Activated CD8-positive, alpha-beta T cell treated with anti-CD3 and anti-CD28 coated beads for 36 hours (primary cell): ENCODE measurements at regions of chr15 and their contacts with region 1.

Region 1: DNA sequence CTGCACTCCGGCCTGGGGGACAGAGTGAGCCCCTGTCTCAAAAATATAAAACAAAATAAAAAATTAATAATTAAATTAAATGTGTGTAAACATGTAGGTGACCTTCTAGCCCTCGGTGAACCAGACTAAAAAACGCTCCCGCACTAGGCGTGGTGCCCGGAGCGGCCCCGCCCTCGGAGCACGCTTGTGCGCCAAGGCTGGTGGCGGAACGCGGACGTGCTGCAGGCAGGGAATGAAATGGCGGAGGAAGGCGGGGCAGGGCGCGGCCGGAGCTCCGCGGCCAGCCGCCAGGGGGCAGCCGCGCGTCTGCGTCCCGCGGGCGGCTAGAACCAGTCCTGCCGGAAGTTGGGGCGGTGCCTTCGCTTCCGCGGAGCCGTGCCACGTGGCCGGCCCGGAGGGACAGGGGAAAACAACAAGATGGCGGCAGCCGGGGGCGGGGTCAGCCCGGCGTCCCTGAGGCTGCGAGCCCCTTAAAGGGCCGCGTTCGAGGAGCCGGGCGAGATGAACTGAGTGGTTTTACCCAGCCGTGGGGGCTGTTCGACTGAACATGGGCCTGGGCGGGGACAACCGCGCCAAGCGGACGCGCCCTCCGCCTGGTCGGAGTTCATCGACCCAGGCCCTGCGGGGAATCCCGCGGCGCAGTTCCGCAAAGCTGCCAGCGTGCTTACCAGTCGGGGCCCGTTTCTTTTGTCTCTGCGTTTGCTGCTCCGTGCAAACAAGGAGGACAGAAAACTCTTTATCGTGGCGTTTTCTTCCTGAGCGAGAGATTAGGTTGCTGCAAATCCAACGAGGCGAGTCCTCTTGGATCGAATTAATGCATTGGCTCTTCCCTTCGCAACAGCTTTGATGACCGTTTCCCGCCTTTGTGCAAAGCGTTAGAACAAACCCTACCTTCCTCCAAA is 90.9 kb upstream of the CHD2 start:
- DNase-seq: peak; percentile 99
- ATAC-seq: peak; percentile 84
- H3K4me3 Mint-ChIP-seq: peak overlapping the region; percentile 82
- H3K27ac Mint-ChIP-seq: peak overlapping the region; percentile 99
- H3K4me1 Mint-ChIP-seq: peaks cover 40% of the 10 kb centered on the region
- H3K27me3 Mint-ChIP-seq: no peaks in the 10 kb centered on the region
- CTCF ChIP-seq: peak; percentile 92

Region 2: DNA sequence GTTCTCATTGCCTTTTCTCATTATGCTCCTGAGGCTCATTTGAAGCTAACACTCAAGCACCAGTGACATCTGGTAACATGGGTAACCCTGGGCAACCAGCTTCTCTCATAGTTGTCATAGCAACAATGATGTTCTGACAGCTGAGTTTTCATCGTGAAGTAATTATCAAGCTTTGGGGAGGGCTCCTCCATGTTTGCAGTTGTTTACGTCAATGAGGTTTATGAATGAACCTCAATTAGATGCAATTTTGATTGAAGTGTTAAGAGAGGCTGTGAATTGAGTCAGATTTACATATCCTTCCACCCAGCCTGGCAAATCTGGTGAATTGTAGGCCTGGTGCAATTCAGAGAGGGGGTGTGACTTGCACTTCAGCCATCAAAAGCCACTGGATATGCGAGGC is 28.4 kb before region 1 on chr15:
- CTCF ChIA-PET with region 1: no interaction called
- POLR2A ChIA-PET with region 1: no interaction called
- intact Hi-C with region 1: no loop called
- DNase-seq: no peak
- ATAC-seq: no peak
- H3K4me3 Mint-ChIP-seq: no peak overlapping the region
- H3K27ac Mint-ChIP-seq: no peak overlapping the region
- H3K4me1 Mint-ChIP-seq: no peaks in the 10 kb centered on the region
- H3K27me3 Mint-ChIP-seq: no peaks in the 10 kb centered on the region
- CTCF ChIP-seq: no peak

Region 3: DNA sequence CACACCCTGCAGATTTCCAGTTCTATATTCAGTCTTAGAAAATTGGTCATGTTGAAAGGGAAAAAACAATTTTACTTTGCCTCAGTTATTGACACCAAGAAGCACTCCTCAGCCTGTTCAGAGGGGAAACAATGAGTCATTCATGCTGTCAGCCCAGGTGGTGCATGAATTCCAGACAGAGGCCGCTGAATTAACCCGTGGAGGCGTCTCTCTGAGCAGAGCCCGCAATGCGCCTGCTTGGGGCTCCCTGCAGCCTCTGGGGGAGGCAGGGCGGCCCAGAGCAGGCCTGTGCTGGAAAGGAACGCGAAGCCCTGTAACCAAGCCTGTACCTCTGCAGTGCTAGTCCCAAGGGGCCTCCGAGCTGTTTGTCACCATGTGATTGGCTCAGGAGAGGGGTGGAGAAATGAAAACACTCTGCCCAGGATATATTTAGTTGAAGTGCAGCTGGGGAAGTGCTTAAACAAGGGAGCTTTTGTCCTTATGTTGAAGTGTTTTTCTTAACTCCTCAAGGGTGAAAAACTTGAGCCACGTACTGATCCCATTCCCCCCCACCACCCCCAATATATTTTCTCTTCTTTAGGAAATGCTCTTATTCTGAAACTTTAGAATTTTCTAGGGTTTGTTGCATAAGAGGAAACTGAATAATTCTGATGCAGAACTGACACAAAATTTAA is 22.6 kb after region 1 on chr15:
- CTCF ChIA-PET with region 1: interaction called, 36 read pairs
- POLR2A ChIA-PET with region 1: interaction called, 56 read pairs
- intact Hi-C with region 1: no loop called
- DNase-seq: peak; percentile 96
- ATAC-seq: peak; percentile 96
- H3K4me3 Mint-ChIP-seq: peak overlapping the region; percentile 66
- H3K27ac Mint-ChIP-seq: peak overlapping the region; percentile 95
- H3K4me1 Mint-ChIP-seq: peaks cover 43% of the 10 kb centered on the region
- H3K27me3 Mint-ChIP-seq: no peaks in the 10 kb centered on the region
- CTCF ChIP-seq: no peak

Region 4: GRCh38 chr15:92889390-92890107 is 80.3 kb after region 1 on chr15:
- CTCF ChIA-PET with region 1: interaction called, 60 read pairs
- POLR2A ChIA-PET with region 1: interaction called, 226 read pairs
- intact Hi-C with region 1: no loop called
- DNase-seq: no peak
- ATAC-seq: peak; percentile 53
- H3K4me3 Mint-ChIP-seq: peak overlapping the region; percentile 69
- H3K27ac Mint-ChIP-seq: peak overlapping the region; percentile 93
- H3K4me1 Mint-ChIP-seq: peaks cover 64% of the 10 kb centered on the region
- H3K27me3 Mint-ChIP-seq: no peaks in the 10 kb centered on the region
- CTCF ChIP-seq: no peak

Region 5: GRCh38 chr15:92917606-92918407 is 108.6 kb after region 1 on chr15:
- CTCF ChIA-PET with region 1: interaction called, 55 read pairs
- POLR2A ChIA-PET with region 1: interaction called, 50 read pairs
- intact Hi-C with region 1: no loop called
- DNase-seq: peak; percentile 99
- ATAC-seq: peak; percentile 34
- H3K4me3 Mint-ChIP-seq: no peak overlapping the region
- H3K27ac Mint-ChIP-seq: peak overlapping the region; percentile 87
- H3K4me1 Mint-ChIP-seq: peaks cover 78% of the 10 kb centered on the region
- H3K27me3 Mint-ChIP-seq: no peaks in the 10 kb centered on the region
- CTCF ChIP-seq: peak; percentile 91